ENCODE measurements at regions of chr20 and their contacts with region 1.

Region 1: GRCh38 chr20:32535953-32536823 is 48.9 kb downstream of the NOL4L start:
- DNase-seq: peak; percentile 71 to 89 (median 78)
- ATAC-seq: peak; percentile 30 to 62
- H3K4me3 Mint-ChIP-seq: peak overlapping the region; percentile 79 to 96 (median 88)
- H3K27ac Mint-ChIP-seq: peak overlapping the region; percentile 90 to 100 (median 98)
- H3K4me1 Mint-ChIP-seq: peaks cover 37 to 93% (median 86%) of the 10 kb centered on the region in 4 donors
- H3K27me3 Mint-ChIP-seq: no peaks in the 10 kb centered on the region

Region 2: DNA sequence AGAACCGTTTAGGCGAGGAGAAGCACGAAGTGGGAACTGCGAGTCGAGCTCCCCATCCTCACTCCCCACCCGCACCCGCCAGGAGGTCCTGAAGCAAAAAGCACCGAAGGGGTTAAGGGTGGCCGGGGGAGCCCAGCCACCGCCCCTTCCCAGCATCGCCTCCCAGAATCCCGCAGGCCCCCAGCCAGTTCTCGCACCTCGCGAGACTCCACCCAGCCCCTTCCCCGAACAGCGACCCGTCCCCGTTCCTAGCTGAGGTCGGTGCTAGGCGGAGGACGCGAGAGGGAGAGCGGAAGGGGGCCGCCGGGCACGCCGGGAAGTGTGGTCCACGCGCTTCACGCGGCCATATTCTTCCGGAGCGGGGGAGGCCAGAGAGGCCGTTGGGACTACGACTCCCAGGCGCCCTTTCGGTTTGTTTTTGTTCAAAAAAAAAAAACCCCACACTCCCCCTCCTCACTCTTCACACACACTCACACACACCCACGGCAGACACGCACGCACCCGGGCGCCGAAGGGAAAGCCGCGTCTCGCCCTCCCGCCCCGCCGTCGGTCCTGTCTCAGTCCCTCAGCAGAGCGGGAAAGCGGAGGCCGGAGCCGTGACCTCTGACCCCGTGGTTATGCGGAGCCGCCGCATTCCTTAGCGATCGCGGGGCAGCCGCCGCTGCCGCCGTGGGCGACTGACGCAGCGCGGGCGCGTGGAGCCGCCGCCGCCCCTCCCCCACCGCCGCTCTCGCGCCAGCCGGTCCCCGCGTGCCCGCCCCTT is 178.1 kb before region 1 on chr20 and contains the start of gene ASXL1:
- POLR2A ChIA-PET with region 1: interaction called, 18 read pairs
- DNase-seq: peak; percentile 86 to 95 (median 92)
- ATAC-seq: peak; percentile 91 to 92
- H3K4me3 Mint-ChIP-seq: peak within 1 kb of the TSS; percentile 87 to 98 (median 96)
- H3K27ac Mint-ChIP-seq: peak within 1 kb of the TSS; percentile 94 to 100 (median 99)
- H3K4me1 Mint-ChIP-seq: peaks cover 16 to 53% (median 46%) of the 10 kb centered on the region in 4 donors
- H3K27me3 Mint-ChIP-seq: no peaks in the 10 kb centered on the region
- polyA plus RNA-seq, gene ASXL1: 15.2 to 20.1 (median 18.4) TPM

Region 3: GRCh38 chr20:32449890-32450401 is 86.2 kb before region 1 on chr20:
- POLR2A ChIA-PET with region 1: no interaction called
- DNase-seq: no peak
- ATAC-seq: no peak
- H3K4me3 Mint-ChIP-seq: no peak overlapping the region
- H3K27ac Mint-ChIP-seq: peak overlapping the region; percentile 45 to 93 (median 86)
- H3K4me1 Mint-ChIP-seq: peaks cover 23 to 55% (median 33%) of the 10 kb centered on the region in 4 donors
- H3K27me3 Mint-ChIP-seq: no peaks in the 10 kb centered on the region

Region 4: GRCh38 chr20:32484958-32485769 is 51.0 kb before region 1 on chr20:
- POLR2A ChIA-PET with region 1: interaction called, 17 read pairs
- DNase-seq: peak; percentile 64 to 93 (median 85)
- ATAC-seq: peak; percentile 72 to 85
- H3K4me3 Mint-ChIP-seq: peak overlapping the region; percentile 87 to 98 (median 95)
- H3K27ac Mint-ChIP-seq: peak overlapping the region; percentile 88 to 98 (median 95)
- H3K4me1 Mint-ChIP-seq: peaks cover 33 to 54% (median 48%) of the 10 kb centered on the region in 4 donors
- H3K27me3 Mint-ChIP-seq: peaks cover 0 to 2% (median 0%) of the 10 kb centered on the region in 5 donors

Region 5: DNA sequence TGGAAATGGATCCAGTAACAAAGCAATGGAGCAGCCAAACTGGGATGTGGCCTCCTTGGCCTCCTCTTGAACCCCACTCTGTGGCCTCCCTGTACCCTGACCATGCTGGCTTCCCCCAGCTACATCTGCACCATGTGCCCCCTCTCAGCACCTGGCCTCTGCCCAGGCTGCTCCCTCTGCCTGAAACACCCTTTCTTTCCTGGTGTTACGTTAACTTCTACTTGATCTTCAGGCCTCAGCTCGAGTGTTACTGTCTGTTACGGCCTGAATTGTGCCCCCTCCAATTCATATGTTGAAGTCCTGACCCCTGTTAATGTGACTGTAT is 18.7 kb after region 1 on chr20:
- POLR2A ChIA-PET with region 1: interaction called, 62 read pairs
- DNase-seq: no peak
- ATAC-seq: no peak
- H3K4me3 Mint-ChIP-seq: peak overlapping the region in 5 of 10 donors; percentile 10 to 51 (median 41)
- H3K27ac Mint-ChIP-seq: peak overlapping the region; percentile 51 to 93 (median 80)
- H3K4me1 Mint-ChIP-seq: peaks cover 52 to 75% (median 71%) of the 10 kb centered on the region in 4 donors
- H3K27me3 Mint-ChIP-seq: no peaks in the 10 kb centered on the region

Region 6: GRCh38 chr20:32560989-32561830 is 25.0 kb after region 1 on chr20:
- POLR2A ChIA-PET with region 1: interaction called, 62 read pairs
- DNase-seq: peak in 4 of 10 donors; percentile 36 to 70 (median 46)
- ATAC-seq: peak; percentile 82 to 84
- H3K4me3 Mint-ChIP-seq: peak overlapping the region; percentile 52 to 81 (median 68)
- H3K27ac Mint-ChIP-seq: peak overlapping the region; percentile 82 to 94 (median 88)
- H3K4me1 Mint-ChIP-seq: peaks cover 45 to 80% (median 67%) of the 10 kb centered on the region in 4 donors
- H3K27me3 Mint-ChIP-seq: no peaks in the 10 kb centered on the region

Region 7: GRCh38 chr20:32574296-32575226 is 38.4 kb after region 1 on chr20:
- POLR2A ChIA-PET with region 1: interaction called, 128 read pairs
- DNase-seq: no peak
- ATAC-seq: peak; percentile 12 to 26
- H3K4me3 Mint-ChIP-seq: peak overlapping the region in 2 of 10 donors; percentile 41 to 62
- H3K27ac Mint-ChIP-seq: peak overlapping the region in 6 of 10 donors; percentile 19 to 94 (median 84)
- H3K4me1 Mint-ChIP-seq: peaks cover 22 to 46% (median 34%) of the 10 kb centered on the region in 4 donors
- H3K27me3 Mint-ChIP-seq: no peaks in the 10 kb centered on the region

Region 8: GRCh38 chr20:32585011-32585518 is 48.9 kb after region 1 on chr20 and contains the start of gene NOL4L:
- POLR2A ChIA-PET with region 1: interaction called, 128 read pairs
- DNase-seq: peak in 7 of 10 donors; percentile 10 to 52 (median 35)
- ATAC-seq: peak; percentile 32 to 39
- H3K4me3 Mint-ChIP-seq: peak within 1 kb of the TSS; percentile 86 to 95 (median 93)
- H3K27ac Mint-ChIP-seq: peak within 1 kb of the TSS; percentile 84 to 95 (median 88)
- H3K4me1 Mint-ChIP-seq: peaks cover 27 to 45% (median 36%) of the 10 kb centered on the region in 4 donors
- H3K27me3 Mint-ChIP-seq: no peaks in the 10 kb centered on the region
- polyA plus RNA-seq, gene NOL4L: 10.0 to 21.5 (median 14.2) TPM

Region 9: GRCh38 chr20:32619586-32619985 is 83.4 kb after region 1 on chr20:
- POLR2A ChIA-PET with region 1: no interaction called
- DNase-seq: no peak
- ATAC-seq: no peak
- H3K4me3 Mint-ChIP-seq: no peak overlapping the region
- H3K27ac Mint-ChIP-seq: peak overlapping the region in 1 of 10 donors; percentile 24
- H3K4me1 Mint-ChIP-seq: peaks cover 14 to 29% (median 20%) of the 10 kb centered on the region in 4 donors
- H3K27me3 Mint-ChIP-seq: no peaks in the 10 kb centered on the region

Measured in naive thymus-derived CD8-positive, alpha-beta T cell (primary cell).